Dendritic cell treated with granulocyte-macrophage colony-stimulating factor and Interleukin-4, amounts not matched to agents 40 ng/mL and 50 ng/mL, for 4 days (primary cell): ENCODE measurements at regions of chr7 and their contacts with region 1.

Region 1: GRCh38 chr7:109713366-109713765 is 1143.7 kb downstream of the DNAJB9 start:
- H3K4me3 Mint-ChIP-seq: no peak overlapping the region
- H3K27ac Mint-ChIP-seq: no peak overlapping the region
- H3K4me1 Mint-ChIP-seq: no peaks in the 10 kb centered on the region
- H3K27me3 Mint-ChIP-seq: no peaks in the 10 kb centered on the region

Region 2: DNA sequence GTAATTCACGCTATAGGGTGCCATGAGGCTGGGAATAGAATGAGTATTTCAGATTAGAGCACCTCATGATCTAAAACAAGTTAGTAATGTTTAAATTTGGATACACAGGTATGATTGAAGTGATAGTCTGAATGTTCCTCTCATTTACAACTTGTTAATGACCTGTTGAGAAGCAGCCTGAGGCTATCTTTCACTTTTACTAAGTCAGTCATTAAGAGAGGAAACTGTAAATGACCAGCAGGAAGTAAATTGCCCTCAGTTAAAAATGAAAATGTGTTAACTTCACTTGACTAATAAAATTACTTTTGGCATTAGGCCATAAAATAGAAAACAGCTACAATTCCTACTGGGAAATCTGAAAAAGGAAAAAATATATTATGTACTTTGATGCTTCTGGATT is 101.7 kb before region 1 on chr7:
- intact Hi-C with region 1: no loop called
- H3K4me3 Mint-ChIP-seq: no peak overlapping the region
- H3K27ac Mint-ChIP-seq: no peak overlapping the region
- H3K4me1 Mint-ChIP-seq: no peaks in the 10 kb centered on the region
- H3K27me3 Mint-ChIP-seq: no peaks in the 10 kb centered on the region

Region 3: DNA sequence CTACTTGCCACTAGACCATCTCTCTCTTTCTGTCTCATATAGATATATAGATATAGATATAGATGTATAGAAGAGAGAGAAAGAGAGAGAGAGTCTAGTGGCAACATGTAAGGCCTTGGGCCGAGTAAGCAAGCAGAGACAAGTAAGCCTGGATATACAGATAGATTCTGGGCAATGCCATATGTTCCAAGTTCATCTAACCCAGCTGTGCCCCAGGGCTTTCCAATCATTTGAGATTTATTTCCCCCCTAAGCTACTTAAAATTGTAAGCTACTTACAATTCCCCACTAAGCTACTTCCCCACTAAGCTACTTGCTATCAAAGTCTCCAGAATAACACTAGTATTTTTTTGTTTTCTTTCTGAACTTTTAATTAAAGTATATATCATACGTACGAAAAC is 49.6 kb before region 1 on chr7:
- intact Hi-C with region 1: loop called (anchors 5 kb)
- H3K4me3 Mint-ChIP-seq: no peak overlapping the region
- H3K27ac Mint-ChIP-seq: no peak overlapping the region
- H3K4me1 Mint-ChIP-seq: no peaks in the 10 kb centered on the region
- H3K27me3 Mint-ChIP-seq: no peaks in the 10 kb centered on the region